Activated CD8-positive, alpha-beta memory T cell treated with anti-CD3 and anti-CD28 coated beads, Interleukin-2, amount 10 ng/mL, durations not matched to agents 7 days and 5 days (primary cell): ENCODE measurements at regions of chr16 and their contacts with region 1.

Region 1: GRCh38 chr16:56513972-56514371 is 5.9 kb downstream of the BBS2 start:
- DNase-seq: peak; percentile 72
- ATAC-seq: peak; percentile 72
- H3K4me3 Mint-ChIP-seq: no peak overlapping the region
- H3K27ac Mint-ChIP-seq: no peak overlapping the region
- H3K4me1 Mint-ChIP-seq: peaks cover 6% of the 10 kb centered on the region
- H3K27me3 Mint-ChIP-seq: no peaks in the 10 kb centered on the region

Region 2: DNA sequence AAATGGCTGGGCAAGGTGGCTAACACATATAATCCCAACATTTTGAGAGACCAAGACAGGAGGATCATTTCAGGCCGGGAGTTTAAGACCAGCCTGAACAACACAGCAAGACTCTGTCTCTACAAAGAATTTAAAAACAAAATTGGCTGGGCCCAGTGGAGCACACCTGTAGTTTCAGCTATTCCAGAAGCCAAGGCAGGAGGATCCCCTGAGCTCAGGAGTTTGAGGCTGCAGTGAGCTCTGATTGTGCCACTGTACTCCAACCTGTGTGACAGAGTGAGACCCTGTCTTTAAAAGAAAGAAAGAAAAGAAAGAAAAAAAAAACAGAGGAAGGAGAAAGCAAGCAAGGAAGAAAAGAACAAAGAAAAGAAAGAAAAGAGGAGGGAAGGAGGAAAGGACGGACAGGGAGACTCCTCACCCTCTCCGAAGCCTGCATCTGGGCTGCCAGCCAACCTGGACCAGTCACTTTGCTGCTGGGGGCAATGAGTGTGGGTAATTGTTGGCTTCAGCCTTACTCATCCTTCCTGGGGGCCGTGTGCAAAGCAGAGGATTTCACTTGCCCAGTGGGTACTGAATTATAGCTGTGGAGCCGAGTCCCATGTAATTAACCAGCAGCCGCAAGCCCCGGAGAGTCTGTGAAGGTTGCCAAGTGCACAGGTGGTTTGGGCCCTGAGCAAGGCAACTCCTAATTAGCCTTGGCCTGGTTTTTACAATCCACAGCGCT is 44.2 kb after region 1 on chr16:
- CTCF ChIA-PET with region 1: no interaction called
- DNase-seq: no peak
- ATAC-seq: no peak
- H3K4me3 Mint-ChIP-seq: no peak overlapping the region
- H3K27ac Mint-ChIP-seq: no peak overlapping the region
- H3K4me1 Mint-ChIP-seq: no peaks in the 10 kb centered on the region
- H3K27me3 Mint-ChIP-seq: peaks cover 62% of the 10 kb centered on the region

Region 3: GRCh38 chr16:56583351-56584168 is 69.6 kb after region 1 on chr16:
- CTCF ChIA-PET with region 1: no interaction called
- DNase-seq: no peak
- ATAC-seq: no peak
- H3K4me3 Mint-ChIP-seq: no peak overlapping the region
- H3K27ac Mint-ChIP-seq: no peak overlapping the region
- H3K4me1 Mint-ChIP-seq: no peaks in the 10 kb centered on the region
- H3K27me3 Mint-ChIP-seq: peaks cover 44% of the 10 kb centered on the region

Region 4: GRCh38 chr16:56600398-56600999 is 86.5 kb after region 1 on chr16:
- CTCF ChIA-PET with region 1: interaction called, 14 read pairs
- DNase-seq: peak; percentile 62
- ATAC-seq: peak; percentile 61
- H3K4me3 Mint-ChIP-seq: no peak overlapping the region
- H3K27ac Mint-ChIP-seq: no peak overlapping the region
- H3K4me1 Mint-ChIP-seq: peaks cover 9% of the 10 kb centered on the region
- H3K27me3 Mint-ChIP-seq: peaks cover 42% of the 10 kb centered on the region